Vagina (tissue), 2 donors: ENCODE measurements at regions of chr2 and their contacts with region 1.

Region 1: DNA sequence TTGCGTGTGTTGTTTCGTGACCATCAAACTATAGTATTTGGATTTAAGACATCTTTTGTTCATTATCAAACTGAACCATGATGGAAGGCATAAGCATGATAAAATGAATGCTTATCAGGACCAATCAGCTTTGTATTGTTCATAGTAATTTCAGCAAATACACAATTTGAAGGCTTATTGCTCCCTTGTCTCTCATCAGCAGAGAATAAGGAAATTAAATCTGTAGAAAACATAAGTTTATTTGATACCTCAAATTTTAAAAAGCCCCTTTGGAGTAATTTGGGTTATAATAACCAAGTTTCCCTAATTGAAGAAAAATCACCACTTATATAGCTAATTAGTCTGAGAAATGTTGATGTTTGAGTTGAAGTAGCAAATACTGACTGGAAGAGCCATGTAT is 705.7 kb downstream of the NUP35 start:
- DNase-seq: no peak
- H3K4me3 ChIP-seq: no peak overlapping the region
- H3K27ac ChIP-seq: no peak overlapping the region
- H3K4me1 ChIP-seq: no peaks in the 10 kb centered on the region
- H3K27me3 ChIP-seq: no peaks in the 10 kb centered on the region
- CTCF ChIP-seq: no peak
- POLR2A ChIP-seq: no peak

Region 2: DNA sequence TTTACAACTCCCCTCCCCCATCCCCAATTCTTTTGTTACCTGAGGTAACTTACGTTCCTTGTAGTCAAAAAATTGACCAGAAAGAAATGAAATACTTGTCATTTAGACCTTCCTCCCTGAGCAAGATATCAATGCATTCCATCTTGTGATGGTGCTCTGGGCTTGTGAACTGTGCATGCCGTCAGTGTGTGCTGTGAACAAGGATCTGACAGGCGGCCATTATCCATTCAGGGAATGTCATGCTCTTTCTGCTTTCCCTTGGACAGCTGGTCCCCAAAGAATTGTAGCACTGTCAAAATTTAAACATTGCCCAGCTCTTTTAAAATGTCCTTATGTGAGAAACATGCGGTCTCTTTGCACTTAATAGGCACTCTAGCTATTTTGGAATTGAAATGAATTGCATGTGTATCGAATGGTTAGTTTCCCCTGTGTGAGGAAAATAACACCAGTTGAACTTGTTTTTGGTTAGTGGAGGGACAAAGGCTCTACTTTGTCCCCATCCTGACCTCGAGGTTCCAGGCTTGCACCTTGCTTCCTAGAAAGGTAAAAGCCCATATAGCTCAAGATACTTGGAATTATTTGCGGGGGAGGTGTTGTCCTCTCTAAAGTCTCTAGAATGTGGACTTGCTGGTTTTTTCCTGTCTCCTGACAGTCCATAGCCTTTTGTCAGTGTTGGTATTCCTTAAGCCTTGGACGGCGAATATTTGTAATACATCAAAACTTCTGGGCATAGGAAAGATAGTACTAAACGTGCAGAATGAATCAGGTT is 354.8 kb before region 1 on chr2:
- intact Hi-C with region 1: no loop called
- DNase-seq: no peak
- H3K4me3 ChIP-seq: no peak overlapping the region
- H3K27ac ChIP-seq: no peak overlapping the region
- H3K4me1 ChIP-seq: no peaks in the 10 kb centered on the region
- H3K27me3 ChIP-seq: no peaks in the 10 kb centered on the region
- CTCF ChIP-seq: no peak
- POLR2A ChIP-seq: no peak

Region 3: GRCh38 chr2:183666031-183666430 is 163.9 kb before region 1 on chr2:
- intact Hi-C with region 1: no loop called
- DNase-seq: no peak
- H3K4me3 ChIP-seq: no peak overlapping the region
- H3K27ac ChIP-seq: no peak overlapping the region
- H3K4me1 ChIP-seq: no peaks in the 10 kb centered on the region
- H3K27me3 ChIP-seq: no peaks in the 10 kb centered on the region
- CTCF ChIP-seq: no peak
- POLR2A ChIP-seq: no peak

Region 4: DNA sequence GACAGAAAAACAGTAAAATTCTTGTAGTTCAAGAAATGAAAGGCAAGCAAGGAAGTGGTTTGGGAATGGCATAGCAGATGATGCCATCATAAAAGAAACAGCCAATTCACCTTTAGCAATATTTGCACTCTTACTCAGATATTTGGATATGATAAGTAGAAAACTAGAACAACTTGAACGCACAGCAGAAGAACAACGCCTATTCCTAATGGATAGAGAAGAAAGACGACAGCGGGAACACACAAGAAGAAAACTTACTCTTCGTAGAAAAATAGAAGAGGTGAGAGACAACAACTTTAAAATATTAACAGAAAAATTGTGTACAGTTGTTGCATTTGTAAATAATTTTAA is 1916.6 kb after region 1 on chr2:
- intact Hi-C with region 1: loop called (anchors 5 kb)
- DNase-seq: no peak
- H3K4me3 ChIP-seq: no peak overlapping the region
- H3K27ac ChIP-seq: no peak overlapping the region
- H3K4me1 ChIP-seq: no peaks in the 10 kb centered on the region
- H3K27me3 ChIP-seq: no peaks in the 10 kb centered on the region
- CTCF ChIP-seq: no peak
- POLR2A ChIP-seq: no peak